AG04449 (cell line): ENCODE measurements at regions of chr3 and their contacts with region 1.

Region 1: DNA sequence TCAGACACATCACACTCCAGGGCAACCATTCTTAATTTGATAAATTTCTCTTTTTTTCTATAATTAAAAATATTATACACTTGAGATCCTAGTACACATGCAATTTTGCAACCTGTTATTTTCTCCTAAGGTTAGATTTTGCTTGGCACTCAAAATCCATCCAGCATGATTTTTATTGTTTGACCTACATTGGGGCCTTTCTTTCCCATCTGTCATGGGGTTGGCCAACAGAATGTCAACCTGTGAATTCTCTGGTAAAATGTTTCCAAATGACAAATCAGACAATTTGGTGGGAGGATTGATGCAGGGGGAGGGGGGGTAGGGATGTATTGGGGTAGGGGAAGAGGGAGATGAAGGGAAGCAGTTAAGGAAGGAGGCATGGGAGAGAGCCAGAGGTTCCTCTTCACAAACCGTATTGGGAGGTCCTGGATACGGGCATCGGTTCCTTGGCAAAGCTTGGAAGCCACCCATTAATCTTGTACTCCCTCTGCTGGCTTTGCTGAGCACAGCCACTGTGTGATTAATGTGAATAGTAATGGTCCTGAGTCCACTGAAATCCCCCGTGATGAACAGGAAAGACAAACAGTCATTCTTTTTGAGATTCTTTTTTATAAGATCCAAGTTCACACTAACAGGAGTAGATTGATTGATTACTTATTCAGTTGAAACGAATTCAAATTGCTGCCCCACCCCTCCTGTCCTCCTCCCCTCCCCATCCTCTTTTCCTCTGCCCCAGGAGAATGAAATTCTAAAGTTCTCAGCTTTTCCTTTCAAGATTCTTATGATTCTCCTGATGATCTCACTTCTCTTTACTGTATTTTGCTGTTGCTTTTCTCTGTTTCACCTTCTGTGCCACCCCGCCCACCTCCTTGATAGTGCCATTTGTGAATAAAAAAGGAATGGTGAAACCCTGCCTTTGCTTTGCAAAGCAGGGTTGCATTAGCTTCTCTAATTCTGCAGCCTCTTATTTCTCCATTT is 82.2 kb upstream of the SLC25A26 start:
- DNase-seq: no peak
- H3K4me3 ChIP-seq: no peak overlapping the region
- CTCF ChIP-seq: peak; percentile 86

Region 2: DNA sequence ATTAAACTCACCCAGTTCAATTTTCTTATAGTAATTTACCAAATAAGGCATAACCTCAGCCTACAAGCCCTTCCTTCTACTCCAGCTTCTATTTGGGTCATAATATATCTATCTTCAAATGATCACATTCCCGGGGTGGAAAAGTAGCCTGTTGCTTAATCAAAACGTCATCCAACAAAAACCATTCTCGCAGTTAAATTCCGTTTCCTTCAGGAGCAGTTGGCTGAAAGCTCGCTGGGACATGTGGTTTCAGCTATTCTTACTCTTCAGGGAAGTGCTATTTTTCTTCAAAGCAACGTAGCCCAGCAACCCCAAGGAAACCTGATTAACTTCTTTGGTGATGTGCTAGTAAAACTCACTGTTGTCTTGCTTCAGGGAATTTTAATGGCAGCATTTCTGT is 159.5 kb before region 1 on chr3:
- CTCF ChIA-PET with region 1: interaction called, 13 read pairs
- POLR2A ChIA-PET with region 1: no interaction called
- DNase-seq: peak; percentile 75
- H3K4me3 ChIP-seq: no peak overlapping the region
- CTCF ChIP-seq: no peak

Region 3: GRCh38 chr3:66038726-66039589 is 99.7 kb before region 1 on chr3 and contains the start of gene MAGI1:
- CTCF ChIA-PET with region 1: interaction called, 15 read pairs
- POLR2A ChIA-PET with region 1: no interaction called
- DNase-seq: no peak
- H3K4me3 ChIP-seq: peak within 1 kb of the TSS; percentile 98
- CTCF ChIP-seq: no peak

Region 4: DNA sequence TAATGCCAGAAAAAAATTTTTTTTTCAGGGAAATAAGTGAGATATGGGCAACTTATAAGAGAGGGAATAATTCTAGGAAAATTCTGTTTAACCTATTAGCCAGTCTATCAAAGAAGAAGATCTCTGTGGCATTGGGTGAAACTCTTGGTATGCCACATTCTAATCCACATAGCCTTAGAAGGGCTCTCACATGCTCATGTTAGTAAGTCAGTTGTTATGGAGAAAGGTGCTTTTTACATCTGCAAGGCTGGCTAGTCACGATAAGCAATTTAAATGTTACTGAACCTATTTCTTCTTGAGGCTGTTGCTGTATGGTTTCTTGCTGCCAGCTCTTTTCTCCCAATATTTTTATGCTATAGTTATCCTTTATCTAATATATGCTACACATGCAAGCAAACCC is 10.0 kb before region 1 on chr3:
- CTCF ChIA-PET with region 1: interaction called, 21 read pairs
- POLR2A ChIA-PET with region 1: no interaction called
- DNase-seq: no peak
- H3K4me3 ChIP-seq: no peak overlapping the region
- CTCF ChIP-seq: no peak